Activated CD8-positive, alpha-beta T cell treated with anti-CD3 and anti-CD28 coated beads for 36 hours (primary cell): ENCODE measurements at regions of chr19 and their contacts with region 1.

Region 1: GRCh38 chr19:33416307-33417215 is 43.1 kb downstream of the CEBPG start:
- DNase-seq: peak; percentile 86
- ATAC-seq: peak; percentile 86
- H3K4me3 Mint-ChIP-seq: no peak overlapping the region
- H3K27ac Mint-ChIP-seq: no peak overlapping the region
- H3K4me1 Mint-ChIP-seq: peaks cover 4% of the 10 kb centered on the region
- H3K27me3 Mint-ChIP-seq: no peaks in the 10 kb centered on the region
- CTCF ChIP-seq: peak; percentile 75

Region 2: DNA sequence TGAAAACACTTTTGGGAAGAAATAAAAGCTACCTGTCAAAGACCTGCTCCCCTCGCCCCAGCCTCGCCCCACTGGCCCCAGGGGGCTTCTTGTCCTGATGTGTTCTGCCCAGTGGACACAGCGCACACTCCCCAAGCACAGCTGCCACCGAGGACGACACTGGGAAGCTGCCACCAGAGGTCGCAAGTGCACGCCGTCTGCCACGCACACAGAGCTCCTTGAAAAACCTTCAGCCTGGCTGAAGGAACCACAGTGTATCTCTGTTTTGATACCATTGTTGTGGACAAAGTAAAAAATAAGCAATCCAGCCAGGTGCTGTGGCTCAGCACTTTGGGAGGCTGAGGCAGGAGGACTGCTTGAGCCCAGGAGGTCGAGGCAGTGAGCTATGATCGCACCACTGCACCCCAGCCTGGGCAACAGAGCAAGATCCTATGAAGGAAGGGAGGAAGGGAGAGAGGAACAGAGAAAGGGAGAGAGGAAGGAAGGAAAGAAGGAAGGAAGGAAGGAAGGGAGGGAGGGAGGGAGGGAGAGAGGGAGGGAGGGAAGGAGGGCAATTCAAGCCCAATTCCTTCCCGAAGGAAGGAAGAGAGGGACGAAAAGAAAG is 14.2 kb after region 1 on chr19:
- CTCF ChIA-PET with region 1: interaction called, 11 read pairs
- POLR2A ChIA-PET with region 1: no interaction called
- intact Hi-C with region 1: no loop called
- DNase-seq: peak; percentile 79
- ATAC-seq: peak; percentile 88
- H3K4me3 Mint-ChIP-seq: no peak overlapping the region
- H3K27ac Mint-ChIP-seq: peak overlapping the region; percentile 67
- H3K4me1 Mint-ChIP-seq: peaks cover 14% of the 10 kb centered on the region
- H3K27me3 Mint-ChIP-seq: no peaks in the 10 kb centered on the region
- CTCF ChIP-seq: peak; percentile 80

Region 3: GRCh38 chr19:33441277-33441699 is 24.7 kb after region 1 on chr19:
- CTCF ChIA-PET with region 1: no interaction called
- POLR2A ChIA-PET with region 1: no interaction called
- intact Hi-C with region 1: no loop called
- DNase-seq: no peak
- ATAC-seq: peak; percentile 34
- H3K4me3 Mint-ChIP-seq: no peak overlapping the region
- H3K27ac Mint-ChIP-seq: no peak overlapping the region
- H3K4me1 Mint-ChIP-seq: peaks cover 3% of the 10 kb centered on the region
- H3K27me3 Mint-ChIP-seq: no peaks in the 10 kb centered on the region
- CTCF ChIP-seq: no peak